HCT116 (cell line): ENCODE measurements at regions of chr15 and their contacts with region 1.

Region 1: DNA sequence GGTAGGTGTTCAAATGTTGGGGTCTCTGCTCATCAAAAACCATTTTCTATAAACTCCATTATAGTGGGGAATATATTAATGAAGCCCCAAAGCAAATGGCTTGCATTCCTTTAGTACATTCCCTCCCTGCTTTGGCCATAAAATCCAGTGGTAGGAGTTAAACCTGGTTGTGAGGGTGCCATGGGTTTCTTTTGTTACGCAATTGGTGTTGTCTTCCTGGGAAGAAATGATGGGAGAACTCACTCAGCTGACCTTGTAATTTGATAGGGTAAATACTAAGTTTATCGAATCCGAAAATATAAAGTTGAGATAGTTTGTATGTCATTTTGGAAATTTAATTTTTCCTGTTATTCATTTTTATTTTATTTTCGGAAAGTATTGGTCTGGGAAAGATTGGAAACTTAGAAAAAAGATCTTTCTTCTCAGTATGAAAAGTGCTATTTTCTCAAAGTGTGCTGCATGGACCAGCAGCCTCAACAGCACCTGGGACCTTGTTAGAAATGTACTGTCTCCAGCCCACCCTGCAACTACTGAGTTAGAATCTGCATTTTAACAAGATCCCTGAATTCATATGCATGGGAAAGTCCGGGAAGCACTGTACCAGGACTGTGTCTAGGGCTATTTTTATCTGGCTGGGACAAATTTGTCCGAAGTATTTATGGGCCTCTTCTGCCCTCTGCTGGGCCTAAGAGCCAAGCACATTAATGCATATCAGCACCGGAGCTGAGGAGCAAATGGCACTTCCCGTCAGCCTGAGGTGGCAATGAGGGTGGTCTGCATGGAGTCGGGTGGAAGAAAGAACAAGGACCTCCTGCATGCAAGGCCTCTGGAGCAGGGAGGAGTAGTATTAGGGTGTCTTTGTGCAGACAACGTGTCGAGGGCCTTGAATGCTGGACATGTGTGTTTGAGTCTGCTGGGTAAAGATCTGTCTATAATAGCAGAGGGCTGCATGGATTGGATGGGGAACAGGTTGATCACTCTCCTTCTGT is 54.7 kb downstream of the FAM81A start:
- DNase-seq: peak; percentile 60
- ATAC-seq: peak; percentile 98
- H3K4me3 ChIP-seq: no peak overlapping the region
- H3K27ac ChIP-seq: no peak overlapping the region
- H3K4me1 ChIP-seq: peaks cover 0 to 6% of the 10 kb centered on the region in 2 experiments; a peak in 1 of 4 replicates
- H3K27me3 ChIP-seq: no peaks in the 10 kb centered on the region
- CTCF ChIP-seq: peak; percentile 77 to 89 (median 86)
- POLR2A ChIP-seq: no peak
- RAD21 ChIP-seq: peak; percentile 97

Region 2: DNA sequence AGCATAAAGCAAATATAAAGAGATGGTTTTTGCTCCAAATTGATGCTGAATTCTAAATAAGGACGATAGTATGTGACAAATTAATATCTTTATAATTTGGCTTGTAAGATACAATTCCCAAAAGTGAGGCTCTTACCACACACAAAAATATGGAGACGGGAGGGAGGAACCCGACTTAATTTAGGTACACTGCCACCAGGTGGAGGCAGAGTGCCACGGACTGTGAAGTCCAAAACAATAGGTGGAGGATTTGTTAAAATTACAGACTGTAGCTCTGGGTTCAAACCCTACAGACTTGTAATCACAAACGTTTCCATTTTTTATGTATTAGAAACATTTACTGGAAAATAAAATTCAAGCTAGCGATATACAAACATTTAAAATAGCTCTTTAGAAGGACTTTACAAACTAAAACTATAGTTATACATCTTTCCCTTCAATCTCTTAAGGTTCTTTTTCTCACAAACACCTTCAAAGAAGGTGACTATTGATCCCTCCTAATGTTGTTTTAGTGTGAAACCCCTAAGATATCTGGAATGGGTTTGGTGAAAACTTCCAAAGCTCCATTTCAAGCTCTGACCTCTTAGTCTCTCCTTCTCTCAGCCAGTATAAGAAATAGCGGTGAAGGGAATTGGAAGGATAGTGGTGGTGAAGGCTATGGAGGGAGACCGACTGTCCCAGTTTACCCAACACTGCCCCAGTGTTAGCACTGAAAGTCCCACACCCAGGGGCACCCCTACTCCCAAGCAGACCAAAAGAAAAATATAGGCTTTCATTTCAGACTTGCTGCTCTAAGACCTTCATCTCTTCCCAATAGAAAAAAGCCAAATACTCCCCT is 1264.8 kb before region 1 on chr15:
- CTCF ChIA-PET with region 1: interaction called, 9 read pairs
- POLR2A ChIA-PET with region 1: no interaction called
- RAD21 ChIA-PET with region 1: no interaction called
- intact Hi-C with region 1: loop called (anchors 5 kb)
- DNase-seq: peak; percentile 78
- ATAC-seq: peak; percentile 96
- H3K4me3 ChIP-seq: no peak overlapping the region
- H3K27ac ChIP-seq: no peak overlapping the region
- H3K4me1 ChIP-seq: peaks cover 2 to 7% of the 10 kb centered on the region in 2 experiments; a peak in 1 of 4 replicates
- H3K27me3 ChIP-seq: no peaks in the 10 kb centered on the region
- CTCF ChIP-seq: peak; percentile 76 to 93 (median 87)
- POLR2A ChIP-seq: no peak
- RAD21 ChIP-seq: peak; percentile 96

Region 3: DNA sequence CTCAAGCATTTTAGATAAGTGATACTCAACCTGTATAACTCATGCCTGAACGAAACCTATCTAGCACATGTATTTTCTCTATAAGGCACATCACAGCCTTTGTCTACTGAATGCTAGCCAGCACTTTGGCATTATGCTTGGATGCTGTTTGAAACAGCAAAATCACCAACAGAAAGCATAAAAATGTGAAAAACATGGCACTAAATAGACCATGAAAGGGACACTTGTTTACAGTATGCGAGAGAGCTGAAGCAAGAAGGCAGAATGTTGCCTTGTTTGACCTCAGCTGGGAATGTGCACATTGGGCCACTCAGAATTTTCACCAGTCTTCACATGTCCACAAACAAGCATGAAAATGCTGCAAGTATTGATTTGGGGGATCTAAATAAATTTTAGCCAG is 662.1 kb before region 1 on chr15:
- CTCF ChIA-PET with region 1: no interaction called
- POLR2A ChIA-PET with region 1: no interaction called
- RAD21 ChIA-PET with region 1: no interaction called
- intact Hi-C with region 1: no loop called
- DNase-seq: no peak
- ATAC-seq: no peak
- H3K4me3 ChIP-seq: no peak overlapping the region
- H3K27ac ChIP-seq: no peak overlapping the region
- H3K4me1 ChIP-seq: no peaks in the 10 kb centered on the region
- H3K27me3 ChIP-seq: no peaks in the 10 kb centered on the region
- CTCF ChIP-seq: no peak
- POLR2A ChIP-seq: no peak
- RAD21 ChIP-seq: no peak

Region 4: DNA sequence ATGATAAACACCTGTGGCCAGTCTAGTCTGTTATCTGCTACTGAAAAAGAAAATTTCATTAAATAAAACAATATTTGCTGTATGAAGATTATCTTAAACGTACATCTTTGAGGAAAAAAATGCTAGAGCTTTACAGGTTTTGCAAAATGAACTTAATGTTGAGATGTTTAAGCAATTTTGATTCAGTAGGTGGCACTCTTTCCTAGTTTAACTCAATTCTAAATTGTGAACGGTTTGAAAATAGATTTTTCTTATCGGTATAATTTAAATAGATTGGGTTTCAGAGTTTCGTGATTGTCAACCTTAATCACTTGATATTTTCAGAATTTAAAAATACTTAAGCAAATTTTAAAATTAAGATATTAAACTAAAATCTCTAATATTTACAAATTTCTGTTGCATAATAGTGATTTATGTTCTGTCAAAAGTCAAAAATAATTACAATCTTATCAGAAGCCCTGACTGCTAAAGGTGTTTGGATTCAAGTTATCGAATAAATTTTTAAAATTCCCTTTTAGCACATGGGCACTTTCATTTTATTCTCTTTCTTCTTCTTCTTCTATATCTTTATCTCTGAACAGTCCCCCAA is 512.2 kb before region 1 on chr15:
- CTCF ChIA-PET with region 1: interaction called, 4 read pairs
- POLR2A ChIA-PET with region 1: no interaction called
- RAD21 ChIA-PET with region 1: no interaction called
- intact Hi-C with region 1: loop called (anchors 2 kb)
- DNase-seq: peak; percentile 32
- ATAC-seq: no peak
- H3K4me3 ChIP-seq: no peak overlapping the region
- H3K27ac ChIP-seq: no peak overlapping the region
- H3K4me1 ChIP-seq: no peaks in the 10 kb centered on the region
- H3K27me3 ChIP-seq: no peaks in the 10 kb centered on the region
- CTCF ChIP-seq: peak; percentile 42 to 61 (median 61)
- POLR2A ChIP-seq: no peak
- RAD21 ChIP-seq: peak; percentile 73

Region 5: GRCh38 chr15:59087731-59088130 is 405.0 kb before region 1 on chr15:
- CTCF ChIA-PET with region 1: no interaction called
- POLR2A ChIA-PET with region 1: no interaction called
- RAD21 ChIA-PET with region 1: no interaction called
- intact Hi-C with region 1: no loop called
- DNase-seq: no peak
- ATAC-seq: no peak
- H3K4me3 ChIP-seq: no peak overlapping the region
- H3K27ac ChIP-seq: no peak overlapping the region
- H3K4me1 ChIP-seq: no peaks in the 10 kb centered on the region
- H3K27me3 ChIP-seq: no peaks in the 10 kb centered on the region
- CTCF ChIP-seq: no peak
- POLR2A ChIP-seq: no peak
- RAD21 ChIP-seq: no peak

Region 6: DNA sequence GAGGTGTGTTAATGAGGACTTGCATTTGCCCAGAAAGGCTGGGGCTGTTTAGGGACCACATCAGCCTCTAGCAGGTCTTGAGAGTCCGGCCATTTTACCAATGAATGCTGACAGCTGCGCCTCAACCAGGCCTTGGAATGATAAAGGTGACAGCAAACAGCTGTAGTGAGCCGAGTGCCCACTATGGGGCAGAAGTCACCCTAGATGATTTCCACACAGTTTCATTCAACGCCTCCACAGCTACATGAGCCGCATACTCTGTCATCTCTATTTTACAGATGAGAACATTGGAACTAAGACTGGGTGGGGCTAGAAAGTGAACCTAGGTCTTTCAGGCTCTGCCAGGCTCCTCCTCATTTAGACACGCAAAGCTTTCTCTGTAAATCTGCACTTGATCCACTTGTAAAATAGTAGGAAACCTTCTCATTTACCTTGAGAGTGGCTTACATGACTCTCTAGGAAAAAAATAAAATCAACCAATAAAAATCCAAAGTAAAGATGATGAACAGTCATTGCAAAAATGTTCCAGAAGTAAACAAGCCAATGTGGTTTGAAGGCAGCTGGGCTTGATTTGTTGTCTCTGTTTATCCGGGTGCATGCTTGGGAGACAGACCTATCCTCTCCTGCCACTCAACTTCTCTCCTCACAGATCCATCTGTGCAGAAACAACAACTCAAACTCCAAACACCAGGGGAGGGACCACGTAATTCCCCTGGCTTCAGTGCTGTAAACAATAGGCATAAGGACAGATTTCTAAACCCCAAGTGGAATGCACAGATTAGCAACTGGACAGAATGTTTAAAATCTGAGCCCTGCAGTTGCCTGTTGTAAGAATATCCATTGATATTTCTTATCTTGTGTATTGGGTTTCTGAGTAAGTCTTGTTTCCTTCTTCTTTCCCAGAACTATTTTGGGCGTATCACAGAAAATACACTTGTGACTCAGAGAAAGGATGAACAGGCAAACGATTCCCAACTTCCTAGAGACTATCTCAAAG is 317.6 kb before region 1 on chr15:
- CTCF ChIA-PET with region 1: interaction called, 7 read pairs
- POLR2A ChIA-PET with region 1: no interaction called
- RAD21 ChIA-PET with region 1: interaction called, 3 to 6 read pairs
- intact Hi-C with region 1: loop called (anchors 2 kb)
- DNase-seq: peak; percentile 74
- ATAC-seq: peak; percentile 96
- H3K4me3 ChIP-seq: no peak overlapping the region
- H3K27ac ChIP-seq: no peak overlapping the region; the same call in 1 of the 2 replicates
- H3K4me1 ChIP-seq: peaks cover 9 to 24% of the 10 kb centered on the region in 2 experiments
- H3K27me3 ChIP-seq: no peaks in the 10 kb centered on the region
- CTCF ChIP-seq: peak; percentile 70 to 74 (median 72)
- POLR2A ChIP-seq: no peak
- RAD21 ChIP-seq: peak; percentile 84

Region 7: GRCh38 chr15:59372352-59373211 is 120.1 kb before region 1 on chr15 and contains the start of gene MYO1E:
- CTCF ChIA-PET with region 1: no interaction called
- POLR2A ChIA-PET with region 1: no interaction called
- RAD21 ChIA-PET with region 1: interaction called in 1 of 2 experiments, 3 read pairs
- intact Hi-C with region 1: loop called (anchors 2 kb)
- DNase-seq: peak; percentile 94
- ATAC-seq: peak; percentile 89
- H3K4me3 ChIP-seq: peak within 1 kb of the TSS; percentile 80 to 83
- H3K27ac ChIP-seq: peak within 1 kb of the TSS; percentile 75
- H3K4me1 ChIP-seq: peaks cover 3 to 35% of the 10 kb centered on the region in 2 experiments; a peak in 3 of 4 replicates
- H3K27me3 ChIP-seq: no peaks in the 10 kb centered on the region
- CTCF ChIP-seq: no peak
- POLR2A ChIP-seq: peak; percentile 88
- RAD21 ChIP-seq: no peak
- total RNA-seq, gene MYO1E: 182 TPM

Region 8: GRCh38 chr15:59410391-59410896 is 82.2 kb before region 1 on chr15:
- CTCF ChIA-PET with region 1: no interaction called
- POLR2A ChIA-PET with region 1: no interaction called
- RAD21 ChIA-PET with region 1: no interaction called
- intact Hi-C with region 1: no loop called
- DNase-seq: no peak
- ATAC-seq: no peak
- H3K4me3 ChIP-seq: no peak overlapping the region
- H3K27ac ChIP-seq: no peak overlapping the region
- H3K4me1 ChIP-seq: peaks cover 0 to 14% of the 10 kb centered on the region in 2 experiments; a peak in 2 of 4 replicates
- H3K27me3 ChIP-seq: no peaks in the 10 kb centered on the region
- CTCF ChIP-seq: no peak
- POLR2A ChIP-seq: no peak
- RAD21 ChIP-seq: no peak

Region 9: GRCh38 chr15:59516655-59517461 is 24.2 kb after region 1 on chr15:
- CTCF ChIA-PET with region 1: no interaction called
- POLR2A ChIA-PET with region 1: no interaction called
- RAD21 ChIA-PET with region 1: no interaction called
- intact Hi-C with region 1: no loop called
- DNase-seq: no peak
- ATAC-seq: no peak
- H3K4me3 ChIP-seq: no peak overlapping the region
- H3K27ac ChIP-seq: no peak overlapping the region
- H3K4me1 ChIP-seq: no peaks in the 10 kb centered on the region
- H3K27me3 ChIP-seq: no peaks in the 10 kb centered on the region
- CTCF ChIP-seq: no peak
- POLR2A ChIP-seq: no peak
- RAD21 ChIP-seq: no peak